Esophagus squamous epithelium (tissue), 5 donors: ENCODE measurements at regions of chr19 and their contacts with region 1.

Region 1: GRCh38 chr19:42450314-42450934 is 7.7 kb upstream of the CXCL17 start:
- DNase-seq: no peak
- H3K4me3 ChIP-seq: no peak overlapping the region
- H3K27ac ChIP-seq: peak overlapping the region; percentile 35 to 79 (median 52)
- H3K4me1 ChIP-seq: peaks cover 0 to 63% (median 0%) of the 10 kb centered on the region in 3 donors
- H3K27me3 ChIP-seq: no peaks in the 10 kb centered on the region
- CTCF ChIP-seq: peak; percentile 68 to 96 (median 91)
- POLR2A ChIP-seq: no peak

Region 2: DNA sequence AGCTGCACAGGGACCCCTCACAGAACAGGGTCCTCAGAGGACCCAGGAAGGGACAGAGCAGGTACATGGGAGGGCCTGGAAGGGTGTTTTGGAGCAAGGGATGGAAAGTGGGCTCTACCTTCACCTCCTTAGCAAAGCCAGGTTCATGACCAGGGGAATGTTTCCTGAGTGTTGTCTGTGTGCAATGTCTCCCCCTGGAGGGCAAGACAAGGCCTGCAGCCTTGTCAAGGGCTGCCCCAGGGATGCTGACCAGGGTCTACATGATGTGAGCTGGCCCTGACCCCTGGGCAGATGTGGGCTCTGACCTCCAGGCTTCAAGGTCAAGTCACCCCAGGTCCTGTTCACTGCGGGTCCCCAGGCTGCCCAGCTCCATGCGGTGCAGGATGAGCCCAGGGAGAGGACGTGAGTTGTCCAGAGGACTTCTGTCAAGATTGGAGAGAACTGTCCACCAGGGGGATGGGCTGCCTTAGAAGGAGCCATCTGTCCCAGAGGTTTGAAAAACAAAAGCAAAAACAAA is 78.9 kb after region 1 on chr19:
- intact Hi-C with region 1: loop called (anchors 2 kb)
- DNase-seq: no peak
- H3K4me3 ChIP-seq: peak overlapping the region in 2 of 4 donors; percentile 41 to 55
- H3K27ac ChIP-seq: peak overlapping the region; percentile 77 to 86 (median 84)
- H3K4me1 ChIP-seq: peaks cover 11 to 44% (median 11%) of the 10 kb centered on the region in 3 donors
- H3K27me3 ChIP-seq: no peaks in the 10 kb centered on the region
- CTCF ChIP-seq: peak; percentile 80 to 93 (median 88)
- POLR2A ChIP-seq: no peak

Region 3: GRCh38 chr19:42540071-42540553 is 89.7 kb after region 1 on chr19:
- intact Hi-C with region 1: no loop called
- DNase-seq: no peak
- H3K4me3 ChIP-seq: no peak overlapping the region
- H3K27ac ChIP-seq: no peak overlapping the region
- H3K4me1 ChIP-seq: no peaks in the 10 kb centered on the region
- H3K27me3 ChIP-seq: peaks cover 0 to 3% (median 0%) of the 10 kb centered on the region in 4 donors
- CTCF ChIP-seq: no peak
- POLR2A ChIP-seq: no peak

Region 4: DNA sequence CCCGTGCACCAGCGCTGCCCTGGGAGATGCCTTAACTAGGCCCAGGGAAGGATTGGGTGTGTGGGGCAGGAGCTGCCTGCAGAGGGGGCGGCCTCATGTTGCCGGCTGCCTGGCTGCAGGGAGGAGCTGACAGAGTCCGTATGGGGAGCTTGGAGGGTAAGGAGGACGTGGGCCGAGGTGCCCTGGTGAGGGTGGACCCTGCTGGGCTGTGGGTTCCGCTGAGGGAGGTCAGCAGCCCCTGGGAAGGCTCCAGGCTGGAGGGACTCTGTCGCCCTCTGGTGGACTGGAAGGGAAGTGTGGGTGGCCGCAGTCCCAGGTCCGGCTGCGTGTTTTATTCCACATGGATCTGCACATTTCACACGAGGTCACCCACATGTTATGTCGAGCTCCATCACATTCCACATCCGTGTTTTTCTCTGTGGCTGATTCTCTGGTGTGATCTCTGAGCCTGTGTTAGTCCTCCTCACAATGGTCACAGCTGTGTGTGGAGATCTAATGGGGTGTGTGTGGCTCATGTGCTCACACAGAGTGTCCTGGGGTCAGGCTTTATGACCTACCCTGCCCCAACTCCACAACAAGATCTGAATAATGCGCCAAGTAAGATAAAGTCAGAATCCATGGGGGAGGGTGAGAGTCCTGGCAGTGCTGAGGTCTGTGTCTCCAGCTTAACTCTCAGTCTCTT is 146.1 kb after region 1 on chr19:
- intact Hi-C with region 1: loop called (anchors 10 kb)
- DNase-seq: no peak
- H3K4me3 ChIP-seq: no peak overlapping the region
- H3K27ac ChIP-seq: no peak overlapping the region
- H3K4me1 ChIP-seq: no peaks in the 10 kb centered on the region
- H3K27me3 ChIP-seq: peaks cover 0 to 34% (median 0%) of the 10 kb centered on the region in 4 donors
- CTCF ChIP-seq: peak; percentile 73 to 90 (median 80)
- POLR2A ChIP-seq: no peak